Caco-2 (cell line): ENCODE measurements at regions of chr2 and their contacts with region 1.

Region 1: DNA sequence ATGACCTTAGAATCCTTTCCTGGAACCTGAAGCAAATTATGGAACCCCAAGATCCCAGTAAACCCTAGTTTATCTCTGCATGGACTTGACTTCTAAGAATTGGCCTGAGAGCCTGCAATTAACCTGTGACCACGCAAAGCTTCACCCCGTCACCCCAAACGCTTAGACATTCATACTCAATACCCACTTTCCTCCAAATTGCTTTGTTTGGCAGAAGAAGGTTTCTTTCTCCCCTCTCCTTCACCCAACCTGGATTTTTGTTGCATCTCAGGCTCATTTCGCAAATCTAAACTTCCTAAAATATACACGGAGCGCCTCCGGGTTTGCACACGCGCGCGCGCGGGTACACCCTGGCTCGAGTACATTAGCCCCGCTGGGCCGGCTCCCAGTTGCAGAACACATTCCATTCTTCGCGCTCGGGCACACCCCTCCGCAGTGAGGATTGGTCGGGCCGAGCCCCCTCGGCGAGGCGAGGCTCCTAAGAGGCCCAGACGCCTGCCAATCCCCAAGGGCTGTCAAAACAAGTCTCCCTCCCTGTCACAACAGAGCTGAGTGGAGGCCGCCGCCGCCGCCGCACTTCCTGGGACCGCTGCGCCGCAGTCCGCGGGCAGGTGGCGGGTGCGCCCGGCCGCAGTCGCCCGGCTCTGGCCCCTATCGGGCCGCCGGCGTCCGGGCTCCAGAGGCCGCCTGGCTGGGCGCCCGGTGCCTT is at the start of gene PLCL1:
- DNase-seq: peak; percentile 94
- H3K4me3 ChIP-seq: peak within 1 kb of the TSS; percentile 40
- H3K4me3 Mint-ChIP-seq: peak within 1 kb of the TSS; percentile 84
- H3K27ac Mint-ChIP-seq: peak within 1 kb of the TSS; percentile 47
- H3K4me1 ChIP-seq: peaks cover 5% of the 10 kb centered on the region; the same call in 1 of the 2 replicates
- H3K4me1 Mint-ChIP-seq: peaks cover 8% of the 10 kb centered on the region
- H3K27me3 ChIP-seq: peaks cover 4% of the 10 kb centered on the region
- H3K27me3 Mint-ChIP-seq: peaks cover 24% of the 10 kb centered on the region
- CTCF ChIP-seq: no peak
- total RNA-seq, gene PLCL1: 1.6 TPM in 2 replicates

Region 2: DNA sequence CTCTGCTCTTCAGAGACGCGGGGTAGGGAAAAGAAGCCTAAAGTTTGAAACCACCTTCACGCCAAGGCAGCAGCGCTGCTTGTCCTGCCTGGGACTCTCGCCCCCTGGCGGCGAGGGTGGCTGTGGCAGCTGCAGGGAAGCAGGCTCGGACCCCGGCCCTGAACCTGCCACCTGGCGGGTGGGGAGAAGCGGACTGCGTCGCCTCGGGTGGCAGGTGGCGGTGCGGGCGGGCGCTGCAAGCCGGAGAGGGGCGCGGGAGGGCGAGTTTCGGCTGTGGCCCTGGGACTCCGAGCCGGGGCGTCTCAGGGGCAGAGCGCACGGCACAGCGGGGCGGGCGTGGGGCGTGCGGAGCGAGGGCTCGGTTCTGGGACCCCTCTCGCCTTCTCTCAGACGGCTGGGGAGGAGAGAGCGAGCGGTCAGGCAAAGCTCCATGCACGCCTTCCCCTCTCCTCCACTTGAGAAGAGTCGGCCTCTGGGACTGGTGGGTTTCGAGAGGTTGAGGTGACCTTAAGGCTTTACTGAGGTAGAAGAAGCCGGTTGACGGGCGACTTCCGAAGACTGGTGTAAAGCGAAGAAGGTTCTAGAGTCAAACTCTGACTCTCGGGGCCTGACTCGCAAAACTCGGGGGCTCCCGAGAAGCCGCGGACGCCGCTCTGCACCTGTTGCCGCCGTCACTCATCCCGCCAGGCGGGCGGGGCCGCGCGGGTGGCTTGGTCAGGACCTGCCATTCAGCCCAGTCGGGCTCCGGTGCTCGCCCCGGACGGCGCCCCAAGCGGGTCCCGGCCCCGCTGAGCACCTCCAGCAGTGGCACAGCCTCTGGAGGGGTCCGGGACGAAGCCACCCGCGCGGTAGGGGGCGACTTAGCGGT is 18.0 kb before region 1 on chr2:
- CTCF ChIA-PET with region 1: no interaction called
- POLR2A ChIA-PET with region 1: no interaction called
- intact Hi-C with region 1: no loop called
- DNase-seq: peak in 1 of 2 experiments; percentile 25
- H3K4me3 ChIP-seq: no peak overlapping the region
- H3K4me3 Mint-ChIP-seq: no peak overlapping the region
- H3K27ac Mint-ChIP-seq: no peak overlapping the region
- H3K4me1 ChIP-seq: no peaks in the 10 kb centered on the region
- H3K4me1 Mint-ChIP-seq: no peaks in the 10 kb centered on the region
- H3K27me3 ChIP-seq: no peaks in the 10 kb centered on the region
- H3K27me3 Mint-ChIP-seq: no peaks in the 10 kb centered on the region
- CTCF ChIP-seq: no peak

Region 3: DNA sequence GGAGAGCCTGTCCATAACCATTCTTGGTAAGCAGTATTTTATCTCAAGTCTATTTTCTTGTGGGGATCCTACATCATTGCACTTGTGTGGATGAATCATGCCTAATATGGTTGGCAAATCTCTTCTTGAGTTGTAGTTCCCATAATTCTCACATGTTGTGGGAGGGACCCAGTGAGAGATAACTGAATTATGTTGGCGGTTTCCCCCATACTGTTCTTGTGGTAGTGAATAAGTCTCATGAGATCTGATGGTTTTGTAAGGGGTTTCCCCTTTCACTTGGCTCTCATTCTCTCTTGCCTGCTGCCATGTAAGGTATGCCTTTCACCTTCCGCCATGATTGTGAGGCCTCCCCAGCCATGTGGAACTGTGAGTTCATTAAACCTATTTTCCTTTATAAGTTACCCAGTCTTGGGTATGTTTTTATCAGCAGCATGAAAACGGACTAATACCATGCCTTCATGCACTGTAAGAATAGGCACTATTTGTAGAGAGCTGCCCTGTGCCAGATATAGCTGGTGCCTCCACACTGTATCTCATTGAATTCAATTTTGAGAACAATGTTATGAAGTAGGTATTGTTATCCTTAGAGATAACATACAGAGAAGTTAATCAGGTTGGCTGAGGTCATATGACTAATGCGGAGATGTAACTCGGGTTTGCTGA is 148.5 kb after region 1 on chr2:
- CTCF ChIA-PET with region 1: no interaction called
- POLR2A ChIA-PET with region 1: no interaction called
- intact Hi-C with region 1: no loop called
- DNase-seq: no peak
- H3K4me3 ChIP-seq: no peak overlapping the region
- H3K4me3 Mint-ChIP-seq: no peak overlapping the region
- H3K27ac Mint-ChIP-seq: no peak overlapping the region
- H3K4me1 ChIP-seq: no peaks in the 10 kb centered on the region
- H3K4me1 Mint-ChIP-seq: no peaks in the 10 kb centered on the region
- H3K27me3 ChIP-seq: no peaks in the 10 kb centered on the region
- H3K27me3 Mint-ChIP-seq: peaks cover 6% of the 10 kb centered on the region
- CTCF ChIP-seq: no peak

Region 4: DNA sequence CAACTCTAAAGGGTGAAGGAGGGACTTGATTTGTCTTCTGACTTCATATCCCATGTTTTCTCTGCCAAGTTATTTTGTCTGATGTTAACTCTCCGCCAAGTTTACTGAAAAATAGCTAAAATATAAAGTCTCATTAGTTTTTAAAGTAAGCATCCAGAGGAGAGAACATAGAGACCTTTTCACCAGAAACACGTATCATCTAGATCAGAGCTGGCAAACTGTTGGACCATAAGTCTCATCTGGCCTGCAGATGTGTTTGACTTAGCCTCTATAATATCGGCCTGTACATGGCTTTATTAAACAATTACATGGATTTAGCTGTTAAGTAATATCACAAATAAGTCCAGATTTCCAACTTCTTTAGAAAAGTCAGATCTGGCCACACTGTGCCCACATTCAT is 182.8 kb after region 1 on chr2:
- CTCF ChIA-PET with region 1: no interaction called
- POLR2A ChIA-PET with region 1: no interaction called
- intact Hi-C with region 1: loop called (anchors 5 kb)
- DNase-seq: no peak
- H3K4me3 ChIP-seq: no peak overlapping the region
- H3K4me3 Mint-ChIP-seq: no peak overlapping the region
- H3K27ac Mint-ChIP-seq: no peak overlapping the region
- H3K4me1 ChIP-seq: no peaks in the 10 kb centered on the region
- H3K4me1 Mint-ChIP-seq: no peaks in the 10 kb centered on the region
- H3K27me3 ChIP-seq: no peaks in the 10 kb centered on the region
- H3K27me3 Mint-ChIP-seq: no peaks in the 10 kb centered on the region
- CTCF ChIP-seq: no peak

Region 5: DNA sequence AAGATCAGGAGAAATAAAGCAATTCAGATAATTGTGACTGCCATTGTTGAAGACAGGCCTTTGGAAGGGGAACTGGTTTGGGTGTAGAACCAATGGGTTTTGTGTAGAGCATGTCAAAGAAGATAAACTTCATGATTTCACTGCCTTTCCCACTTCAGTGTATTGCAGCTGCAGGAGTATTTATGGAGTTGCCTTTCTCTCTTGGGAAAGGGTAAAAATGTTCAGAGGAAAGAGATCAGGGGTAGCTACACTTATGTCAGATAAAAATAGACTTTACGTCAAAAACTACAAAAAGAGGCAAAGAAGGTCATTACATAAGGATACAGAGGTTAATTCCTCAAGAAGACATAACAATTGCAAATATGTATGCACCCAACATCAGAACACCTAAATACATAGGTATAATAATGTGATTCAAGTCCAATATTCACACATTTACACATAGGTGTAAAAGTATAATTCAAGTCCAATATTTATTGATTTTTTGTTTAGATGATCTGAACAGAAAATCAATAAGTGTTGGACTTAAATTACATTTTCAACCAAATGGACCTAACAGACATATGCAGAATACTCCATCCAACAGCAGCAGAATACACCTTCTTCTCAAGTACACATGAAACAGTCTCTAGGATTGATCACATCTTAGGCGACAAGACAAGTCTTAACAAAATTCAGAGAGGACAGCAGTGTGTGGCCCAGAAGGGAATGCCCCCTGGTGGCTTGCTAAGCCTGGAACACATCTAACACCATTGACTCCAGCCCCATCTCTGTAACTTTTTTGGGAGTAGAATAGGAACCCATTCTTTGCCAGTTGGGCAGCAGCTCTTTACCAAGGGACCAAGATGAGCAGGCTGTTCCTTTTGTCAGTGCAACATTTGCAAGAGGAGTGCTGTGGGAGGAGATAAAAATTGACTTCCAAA is 249.8 kb after region 1 on chr2:
- CTCF ChIA-PET with region 1: interaction called, 10 read pairs
- POLR2A ChIA-PET with region 1: no interaction called
- intact Hi-C with region 1: loop called (anchors 1 kb)
- DNase-seq: peak; percentile 49 to 51
- H3K4me3 ChIP-seq: no peak overlapping the region
- H3K4me3 Mint-ChIP-seq: no peak overlapping the region
- H3K27ac Mint-ChIP-seq: no peak overlapping the region
- H3K4me1 ChIP-seq: no peaks in the 10 kb centered on the region
- H3K4me1 Mint-ChIP-seq: no peaks in the 10 kb centered on the region
- H3K27me3 ChIP-seq: no peaks in the 10 kb centered on the region
- H3K27me3 Mint-ChIP-seq: peaks cover 5% of the 10 kb centered on the region
- CTCF ChIP-seq: peak; percentile 57 to 78